ENCODE measurements at regions of chr17 and their contacts with region 1.

Region 1: GRCh38 chr17:19546289-19547065 is 12.8 kb downstream of the SLC47A1 start:
- DNase-seq: peak; percentile 53 to 60 (median 59)
- H3K4me3 ChIP-seq: peak overlapping the region in 1 of 3 experiments; percentile 39
- H3K4me3 Mint-ChIP-seq: peak overlapping the region in 1 of 2 donors; percentile 52
- H3K27ac ChIP-seq: peak overlapping the region; percentile 35 to 73
- H3K27ac Mint-ChIP-seq: peak overlapping the region; percentile 35 to 94 (median 86)
- H3K4me1 ChIP-seq: peaks cover 32 to 33% of the 10 kb centered on the region in 2 donors
- H3K4me1 Mint-ChIP-seq: peaks cover 32% of the 10 kb centered on the region
- H3K27me3 ChIP-seq: no peaks in the 10 kb centered on the region
- H3K27me3 Mint-ChIP-seq: peaks cover 0 to 2% (median 0%) of the 10 kb centered on the region in 3 donors
- CTCF ChIP-seq: peak; percentile 53

Region 2: GRCh38 chr17:19513897-19514488 is 32.5 kb before region 1 on chr17:
- intact Hi-C with region 1: loop called in 1 of 2 experiments (anchors 5 kb)
- DNase-seq: peak; percentile 63 to 70 (median 70)
- H3K4me3 ChIP-seq: no peak overlapping the region
- H3K4me3 Mint-ChIP-seq: no peak overlapping the region
- H3K27ac ChIP-seq: no peak overlapping the region
- H3K27ac Mint-ChIP-seq: peak overlapping the region in 2 of 7 donors; percentile 36 to 65
- H3K4me1 ChIP-seq: peaks cover 0 to under 1% of the 10 kb centered on the region in 2 donors
- H3K4me1 Mint-ChIP-seq: peaks cover 8% of the 10 kb centered on the region
- H3K27me3 ChIP-seq: no peaks in the 10 kb centered on the region
- H3K27me3 Mint-ChIP-seq: peaks cover 0 to 2% (median 0%) of the 10 kb centered on the region in 3 donors
- CTCF ChIP-seq: peak; percentile 96

Measured in CD14-positive monocyte (primary cell).